H1 (cell line): ENCODE measurements at regions of chr5 and their contacts with region 1.

Region 1: DNA sequence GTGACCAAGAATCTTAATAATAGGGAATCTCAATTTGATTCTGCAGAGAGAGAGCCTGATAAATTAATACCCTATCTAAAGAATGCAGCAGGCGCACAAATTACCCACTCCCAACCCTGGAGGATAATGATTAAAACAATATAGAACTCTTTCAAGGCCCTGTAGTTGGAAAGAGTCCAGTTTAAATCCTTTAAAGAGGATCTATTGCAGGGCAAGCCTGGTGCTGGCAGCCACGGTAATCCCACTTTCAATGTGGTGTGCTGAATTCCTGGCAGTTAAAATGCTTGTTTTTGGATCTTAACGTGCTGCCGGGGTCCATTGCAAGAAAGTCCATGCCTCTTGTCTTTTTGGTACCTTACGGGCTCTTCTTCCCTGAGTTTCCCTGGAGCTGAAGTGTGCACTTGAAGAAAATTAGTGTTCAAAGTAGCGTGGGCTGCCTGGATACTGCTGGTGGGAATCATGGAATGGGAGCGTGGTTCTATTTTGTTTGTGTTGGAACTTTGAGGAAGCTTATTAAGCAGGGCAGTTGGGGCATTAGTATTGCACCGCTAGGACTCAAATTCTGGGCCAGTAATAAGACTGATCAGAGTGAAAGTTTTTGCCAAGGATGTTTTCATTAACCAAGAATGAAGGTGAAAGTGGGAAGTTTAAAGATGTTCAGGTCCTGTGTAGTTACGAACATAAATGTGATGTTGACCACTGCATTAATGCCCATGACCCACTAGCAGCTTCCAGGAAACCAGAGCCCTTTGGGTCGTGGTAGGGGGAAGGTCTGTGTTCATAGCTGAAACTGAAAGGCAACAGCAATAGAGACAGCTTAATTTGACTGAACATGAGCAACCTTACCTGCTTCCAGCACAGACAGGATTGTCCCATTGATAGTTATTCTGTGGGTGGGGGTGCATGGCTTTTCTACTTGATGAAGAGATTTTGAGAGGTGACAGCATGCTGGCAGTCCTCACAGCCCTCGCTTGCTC is 20.8 kb downstream of the MARCHF6 start:
- DNase-seq: no peak
- H3K4me3 ChIP-seq: no peak overlapping the region
- H3K27ac ChIP-seq: no peak overlapping the region
- H3K4me1 ChIP-seq: peaks cover 3 to 5% (median 4%) of the 10 kb centered on the region in 4 experiments; a peak in 6 of 7 replicates
- H3K27me3 ChIP-seq: no peaks in the 10 kb centered on the region
- CTCF ChIP-seq: no peak
- EP300 ChIP-seq: no peak
- POLR2A ChIP-seq: no peak
- RAD21 ChIP-seq: no peak

Region 2: GRCh38 chr5:10364186-10364683 is 10.1 kb before region 1 on chr5:
- CTCF ChIA-PET with region 1: interaction called, 35 read pairs
- POLR2A ChIA-PET with region 1: interaction called, 6 read pairs
- DNase-seq: no peak
- H3K4me3 ChIP-seq: no peak overlapping the region
- H3K27ac ChIP-seq: no peak overlapping the region
- H3K4me1 ChIP-seq: no peaks in the 10 kb centered on the region
- H3K27me3 ChIP-seq: no peaks in the 10 kb centered on the region
- CTCF ChIP-seq: peak in 2 of 3 experiments; percentile 37 to 48; a peak in 3 of 4 replicates
- EP300 ChIP-seq: no peak
- POLR2A ChIP-seq: no peak
- RAD21 ChIP-seq: peak; percentile 41 to 60

Region 3: GRCh38 chr5:10401498-10401897 is 27.2 kb after region 1 on chr5:
- CTCF ChIA-PET with region 1: no interaction called
- POLR2A ChIA-PET with region 1: no interaction called
- DNase-seq: no peak
- H3K4me3 ChIP-seq: no peak overlapping the region
- H3K27ac ChIP-seq: no peak overlapping the region
- H3K4me1 ChIP-seq: no peaks in the 10 kb centered on the region
- H3K27me3 ChIP-seq: no peaks in the 10 kb centered on the region
- CTCF ChIP-seq: no peak
- EP300 ChIP-seq: no peak
- POLR2A ChIP-seq: no peak
- RAD21 ChIP-seq: no peak

Region 4: GRCh38 chr5:10441083-10441991 is 67.0 kb after region 1 on chr5 and contains the start of gene ROPN1L:
- CTCF ChIA-PET with region 1: no interaction called
- POLR2A ChIA-PET with region 1: no interaction called
- DNase-seq: peak; percentile 68 to 93
- H3K4me3 ChIP-seq: peak within 1 kb of the TSS; percentile 41 to 83 (median 68)
- H3K27ac ChIP-seq: no peak within 1 kb of the TSS
- H3K4me1 ChIP-seq: peaks cover 0 to 6% (median 4%) of the 10 kb centered on the region in 4 experiments; a peak in 4 of 7 replicates
- H3K27me3 ChIP-seq: peaks cover 0 to 10% (median 6%) of the 10 kb centered on the region in 4 experiments; a peak in 5 of 7 replicates
- CTCF ChIP-seq: peak in 1 of 3 experiments; percentile 14; a peak in 1 of 4 replicates
- EP300 ChIP-seq: no peak
- POLR2A ChIP-seq: peak in 1 of 2 experiments; percentile 66; a peak in 1 of 3 replicates
- RAD21 ChIP-seq: peak in 1 of 2 experiments; percentile 9; a peak in 1 of 4 replicates
- total RNA-seq, gene ROPN1L: 0.38 and 0.73 TPM in 2 replicates

Region 5: GRCh38 chr5:10489810-10490426 is 115.6 kb after region 1 on chr5:
- CTCF ChIA-PET with region 1: no interaction called
- POLR2A ChIA-PET with region 1: no interaction called
- DNase-seq: no peak
- H3K4me3 ChIP-seq: no peak overlapping the region
- H3K27ac ChIP-seq: no peak overlapping the region
- H3K4me1 ChIP-seq: peaks cover 0 to 5% (median 0%) of the 10 kb centered on the region in 4 experiments; a peak in 2 of 7 replicates
- H3K27me3 ChIP-seq: no peaks in the 10 kb centered on the region
- CTCF ChIP-seq: no peak
- EP300 ChIP-seq: no peak
- POLR2A ChIP-seq: no peak
- RAD21 ChIP-seq: no peak

Region 6: GRCh38 chr5:10543585-10544040 is 169.3 kb after region 1 on chr5:
- CTCF ChIA-PET with region 1: no interaction called
- POLR2A ChIA-PET with region 1: no interaction called
- DNase-seq: no peak
- H3K4me3 ChIP-seq: no peak overlapping the region
- H3K27ac ChIP-seq: no peak overlapping the region
- H3K4me1 ChIP-seq: no peaks in the 10 kb centered on the region
- H3K27me3 ChIP-seq: no peaks in the 10 kb centered on the region
- CTCF ChIP-seq: no peak
- EP300 ChIP-seq: no peak
- POLR2A ChIP-seq: no peak
- RAD21 ChIP-seq: no peak